Gastrocnemius medialis (tissue), 4 donors: ENCODE measurements at regions of chr1 and their contacts with region 1.

Region 1: DNA sequence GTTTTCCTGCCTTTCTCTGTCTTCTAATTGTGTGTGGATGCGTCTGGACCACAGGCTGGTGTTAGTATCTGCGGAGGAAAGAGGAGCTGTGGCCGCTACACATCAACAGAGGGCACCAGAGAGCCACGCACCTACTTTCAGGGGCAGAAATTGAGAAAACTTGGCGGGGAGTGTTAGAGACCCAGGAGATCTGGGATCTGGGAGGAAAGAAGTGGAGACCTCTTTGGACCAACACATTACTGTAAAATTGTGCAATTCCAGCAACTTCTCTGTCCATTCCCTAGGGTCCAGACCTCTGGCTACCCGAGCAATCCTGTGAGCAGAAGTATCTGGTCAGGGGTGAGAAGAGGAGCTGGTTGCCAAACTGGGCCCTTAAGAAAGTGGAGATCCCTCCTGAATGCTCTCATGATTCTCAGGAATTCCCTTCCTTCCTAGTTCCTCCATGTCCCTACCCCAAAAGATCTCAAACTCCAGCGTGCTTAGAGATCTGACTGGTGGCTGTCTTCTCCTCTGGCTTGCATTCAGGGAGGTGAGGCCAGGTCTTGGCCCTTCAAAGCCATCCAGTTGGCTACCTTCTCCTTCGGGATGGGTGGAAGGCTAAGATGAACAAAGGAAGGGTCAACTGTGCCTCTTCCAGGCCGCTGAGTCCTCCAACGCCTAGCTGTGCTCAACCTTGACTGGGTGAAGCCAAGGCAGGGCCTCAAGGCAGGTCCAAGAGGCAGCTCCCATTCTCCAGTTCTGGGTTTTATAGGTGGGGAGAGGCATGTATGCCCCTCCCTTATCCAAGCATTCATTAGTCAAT is 1.2 kb upstream of the KIRREL1 start:
- DNase-seq: peak; percentile 48 to 60
- ATAC-seq: peak; percentile 68 to 78
- H3K4me3 ChIP-seq: peak overlapping the region in 2 of 4 donors; percentile 62 to 73
- H3K27ac ChIP-seq: peak overlapping the region; percentile 76 to 84 (median 82)
- H3K4me1 ChIP-seq: peaks cover 0 to 3% of the 10 kb centered on the region in 2 donors
- H3K27me3 ChIP-seq: peaks cover 8 to 22% (median 16%) of the 10 kb centered on the region in 3 donors
- CTCF ChIP-seq: peak; percentile 69 to 87 (median 80)
- POLR2A ChIP-seq: no peak

Region 2: GRCh38 chr1:157751283-157751682 is 240.9 kb before region 1 on chr1:
- in situ Hi-C with region 1: no loop called
- intact Hi-C with region 1: no loop called
- DNase-seq: no peak
- ATAC-seq: no peak
- H3K4me3 ChIP-seq: no peak overlapping the region
- H3K27ac ChIP-seq: no peak overlapping the region
- H3K4me1 ChIP-seq: no peaks in the 10 kb centered on the region
- H3K27me3 ChIP-seq: no peaks in the 10 kb centered on the region
- CTCF ChIP-seq: no peak
- POLR2A ChIP-seq: no peak

Region 3: GRCh38 chr1:158022554-158023278 is 30.5 kb after region 1 on chr1:
- in situ Hi-C with region 1: no loop called
- intact Hi-C with region 1: no loop called
- DNase-seq: peak in 1 of 2 donors; percentile 38
- ATAC-seq: peak; percentile 47 to 75
- H3K4me3 ChIP-seq: no peak overlapping the region
- H3K27ac ChIP-seq: peak overlapping the region; percentile 36 to 75 (median 47)
- H3K4me1 ChIP-seq: peaks cover 24 to 36% of the 10 kb centered on the region in 2 donors
- H3K27me3 ChIP-seq: no peaks in the 10 kb centered on the region
- CTCF ChIP-seq: no peak
- POLR2A ChIP-seq: no peak

Region 4: DNA sequence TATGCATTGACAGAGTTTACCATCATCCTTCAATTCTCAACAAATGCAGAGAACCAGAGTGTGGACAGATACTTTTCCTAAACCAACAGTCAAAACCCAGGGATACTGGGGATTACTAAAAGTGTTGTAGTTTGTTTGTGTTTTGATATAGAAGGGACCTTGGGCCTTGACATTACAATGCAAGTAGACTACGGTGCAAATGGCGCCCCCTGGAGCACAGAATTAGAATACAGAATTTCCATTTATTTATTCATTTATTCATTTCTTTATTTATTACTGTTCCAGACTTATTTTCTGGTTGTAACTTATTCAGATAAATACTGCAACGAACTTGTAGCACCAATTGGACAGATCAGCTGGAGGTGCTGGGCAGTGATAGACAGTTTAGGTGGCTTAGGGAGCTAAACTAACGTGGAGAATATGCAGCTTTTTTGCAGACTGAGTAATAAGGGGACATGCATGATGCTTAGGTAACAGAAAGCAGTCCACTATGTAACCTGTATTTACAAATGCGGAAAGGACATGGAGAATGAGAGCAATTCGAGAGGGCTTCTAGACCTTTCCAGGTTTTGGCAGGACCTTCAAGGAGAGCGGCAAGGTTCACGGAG is 43.8 kb after region 1 on chr1:
- in situ Hi-C with region 1: no loop called
- intact Hi-C with region 1: loop called (anchors 1 kb)
- DNase-seq: no peak
- ATAC-seq: no peak
- H3K4me3 ChIP-seq: no peak overlapping the region
- H3K27ac ChIP-seq: no peak overlapping the region
- H3K4me1 ChIP-seq: no peaks in the 10 kb centered on the region
- H3K27me3 ChIP-seq: no peaks in the 10 kb centered on the region
- CTCF ChIP-seq: peak; percentile 14 to 59 (median 49)
- POLR2A ChIP-seq: no peak

Region 5: DNA sequence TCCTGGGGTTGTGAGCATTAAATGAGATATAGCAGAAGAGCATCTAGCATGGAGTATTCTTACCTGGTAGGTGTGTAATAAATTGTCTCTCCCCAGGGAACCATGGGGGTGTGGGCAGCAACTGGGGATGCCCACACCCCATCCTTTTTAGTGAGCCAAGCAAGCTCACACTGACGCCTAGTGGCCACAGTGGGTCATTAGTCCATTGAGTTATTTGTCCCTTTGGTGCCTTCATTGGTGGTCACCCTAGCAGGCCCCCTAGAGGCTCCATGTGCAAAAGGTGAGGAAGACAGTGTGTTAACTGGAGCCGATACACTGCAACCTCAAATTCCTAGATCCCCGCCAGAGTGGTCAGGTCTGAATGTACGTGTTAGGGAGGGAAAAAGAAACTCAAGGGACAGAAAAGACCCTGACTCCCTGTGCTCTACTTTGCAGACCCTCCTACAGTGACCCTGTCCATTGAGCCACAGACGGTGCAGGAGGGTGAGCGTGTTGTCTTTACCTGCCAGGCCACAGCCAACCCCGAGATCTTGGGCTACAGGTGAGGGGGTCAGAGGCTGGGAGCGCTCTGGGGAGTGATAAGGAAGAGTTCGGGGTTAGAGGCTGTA is 95.2 kb after region 1 on chr1:
- in situ Hi-C with region 1: no loop called
- intact Hi-C with region 1: loop called (anchors 2 kb)
- DNase-seq: no peak
- ATAC-seq: no peak
- H3K4me3 ChIP-seq: no peak overlapping the region
- H3K27ac ChIP-seq: no peak overlapping the region
- H3K4me1 ChIP-seq: no peaks in the 10 kb centered on the region
- H3K27me3 ChIP-seq: no peaks in the 10 kb centered on the region
- CTCF ChIP-seq: peak; percentile 43 to 66 (median 52)
- POLR2A ChIP-seq: no peak